ENCODE measurements at regions of chr6 and their contacts with region 1.

Region 1: DNA sequence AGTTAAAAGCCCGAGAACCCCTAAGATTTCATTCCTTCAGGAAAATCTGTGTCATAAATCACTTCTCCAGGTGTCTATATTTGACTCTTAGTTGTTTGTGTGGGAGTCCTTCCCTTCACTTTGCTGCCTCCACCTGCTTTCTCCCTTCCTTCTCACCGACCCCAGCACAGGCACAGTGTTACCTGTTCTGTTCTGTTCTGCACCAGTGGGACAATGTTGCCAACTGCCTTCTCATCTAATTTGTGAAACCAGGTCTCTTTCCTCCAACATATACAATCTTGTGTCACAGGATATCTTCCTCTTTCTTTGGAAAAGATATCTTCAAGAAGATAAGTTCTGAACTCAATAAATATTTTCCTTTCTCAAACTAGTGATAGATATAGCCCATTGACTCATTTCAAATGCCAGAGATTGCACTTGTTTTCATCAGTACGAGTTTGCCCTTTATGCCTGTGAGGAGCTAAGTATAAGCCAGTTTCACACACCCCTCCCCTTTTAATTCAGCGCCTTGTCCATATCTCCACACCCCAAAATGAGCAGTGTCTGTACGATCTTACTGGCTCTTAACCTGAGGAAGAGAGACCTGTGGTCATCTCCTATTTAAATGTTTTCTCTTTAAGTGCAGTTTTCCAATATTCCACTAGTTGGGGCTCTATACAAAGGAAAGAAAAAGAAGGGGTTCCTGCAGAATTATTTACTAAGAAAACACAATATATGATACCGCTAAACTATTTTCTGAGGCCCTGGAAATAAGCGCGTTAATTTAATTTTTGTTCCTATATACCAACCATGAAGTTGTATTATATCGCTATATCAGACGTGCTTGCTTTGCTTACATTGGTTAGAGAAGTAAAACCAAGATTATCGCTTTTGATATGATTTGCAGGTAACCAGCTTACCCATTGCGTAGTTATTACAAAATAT is 81.6 kb upstream of the PREP start:
- DNase-seq: peak in 5 of 9 donors; percentile 7 to 36 (median 20)
- ATAC-seq: peak; percentile 59
- H3K4me3 ChIP-seq: no peak overlapping the region
- H3K4me3 Mint-ChIP-seq: no peak overlapping the region
- H3K27ac ChIP-seq: no peak overlapping the region
- H3K27ac Mint-ChIP-seq: peak overlapping the region in 2 of 9 donors; percentile 20 to 52
- H3K4me1 ChIP-seq: peaks cover 0 to 35% of the 10 kb centered on the region in 2 donors
- H3K4me1 Mint-ChIP-seq: peaks cover 0 to 63% (median 0%) of the 10 kb centered on the region in 7 donors
- H3K27me3 ChIP-seq: no peaks in the 10 kb centered on the region
- H3K27me3 Mint-ChIP-seq: peaks cover 11 to 16% (median 13%) of the 10 kb centered on the region in 5 donors

Region 2: GRCh38 chr6:105449756-105450395 is 34.6 kb before region 1 on chr6:
- CTCF ChIA-PET with region 1: no interaction called
- POLR2A ChIA-PET with region 1: no interaction called
- intact Hi-C with region 1: no loop called
- DNase-seq: no peak
- ATAC-seq: no peak
- H3K4me3 ChIP-seq: no peak overlapping the region
- H3K4me3 Mint-ChIP-seq: no peak overlapping the region
- H3K27ac ChIP-seq: no peak overlapping the region
- H3K27ac Mint-ChIP-seq: no peak overlapping the region
- H3K4me1 ChIP-seq: peaks cover 6 to 14% of the 10 kb centered on the region in 2 donors
- H3K4me1 Mint-ChIP-seq: peaks cover 8 to 18% (median 17%) of the 10 kb centered on the region in 7 donors
- H3K27me3 ChIP-seq: no peaks in the 10 kb centered on the region
- H3K27me3 Mint-ChIP-seq: peaks cover 6 to 32% (median 9%) of the 10 kb centered on the region in 5 donors

Region 3: DNA sequence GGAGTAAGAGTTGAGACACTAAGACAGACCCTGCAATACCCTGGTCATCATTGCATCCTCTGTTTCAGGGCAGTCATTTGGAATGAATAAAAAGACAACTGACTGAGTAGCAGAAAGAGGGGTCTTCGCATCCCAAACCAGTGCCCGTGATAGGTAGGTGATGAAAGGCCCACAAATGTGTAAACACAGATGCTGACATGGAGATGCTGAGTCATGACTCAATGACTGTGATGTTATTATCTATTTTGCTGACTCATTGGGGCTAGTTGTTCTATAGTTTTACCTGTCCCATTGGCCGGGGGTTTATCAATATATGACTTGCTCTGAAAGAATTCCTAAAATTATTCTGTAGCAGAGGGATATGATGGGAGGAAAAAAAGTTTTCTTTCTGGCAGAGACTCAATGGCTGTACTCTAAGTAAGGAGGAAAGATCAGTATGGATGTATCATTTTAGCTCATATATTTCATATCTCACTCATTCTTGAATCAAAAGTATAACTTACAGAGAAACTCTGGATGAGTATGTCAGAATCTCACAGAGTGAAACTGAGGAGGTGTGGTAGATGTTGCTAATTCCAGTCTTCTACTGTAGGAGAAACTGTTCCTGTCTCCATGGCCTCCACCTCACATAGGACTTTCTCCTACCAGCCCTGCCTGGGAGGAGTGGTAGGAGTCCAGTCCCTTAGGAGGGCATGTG is 38.3 kb after region 1 on chr6:
- CTCF ChIA-PET with region 1: no interaction called
- POLR2A ChIA-PET with region 1: no interaction called
- intact Hi-C with region 1: no loop called
- DNase-seq: no peak
- ATAC-seq: no peak
- H3K4me3 ChIP-seq: no peak overlapping the region
- H3K4me3 Mint-ChIP-seq: no peak overlapping the region
- H3K27ac ChIP-seq: no peak overlapping the region
- H3K27ac Mint-ChIP-seq: no peak overlapping the region
- H3K4me1 ChIP-seq: no peaks in the 10 kb centered on the region
- H3K4me1 Mint-ChIP-seq: peaks cover 0 to 4% (median 0%) of the 10 kb centered on the region in 7 donors
- H3K27me3 ChIP-seq: no peaks in the 10 kb centered on the region
- H3K27me3 Mint-ChIP-seq: peaks cover 0 to 16% (median 7%) of the 10 kb centered on the region in 5 donors

Region 4: GRCh38 chr6:105733565-105734162 is 249.2 kb after region 1 on chr6:
- CTCF ChIA-PET with region 1: no interaction called
- POLR2A ChIA-PET with region 1: no interaction called
- intact Hi-C with region 1: loop called (anchors 1 kb)
- DNase-seq: peak in 6 of 9 donors; percentile 10 to 41 (median 34)
- ATAC-seq: no peak
- H3K4me3 ChIP-seq: no peak overlapping the region
- H3K4me3 Mint-ChIP-seq: no peak overlapping the region
- H3K27ac ChIP-seq: no peak overlapping the region
- H3K27ac Mint-ChIP-seq: no peak overlapping the region
- H3K4me1 ChIP-seq: no peaks in the 10 kb centered on the region
- H3K4me1 Mint-ChIP-seq: peaks cover 0 to 36% (median 8%) of the 10 kb centered on the region in 7 donors
- H3K27me3 ChIP-seq: no peaks in the 10 kb centered on the region
- H3K27me3 Mint-ChIP-seq: peaks cover 0 to 8% (median 0%) of the 10 kb centered on the region in 5 donors